ENCODE measurements at regions of chr12 and their contacts with region 1.

Region 1: DNA sequence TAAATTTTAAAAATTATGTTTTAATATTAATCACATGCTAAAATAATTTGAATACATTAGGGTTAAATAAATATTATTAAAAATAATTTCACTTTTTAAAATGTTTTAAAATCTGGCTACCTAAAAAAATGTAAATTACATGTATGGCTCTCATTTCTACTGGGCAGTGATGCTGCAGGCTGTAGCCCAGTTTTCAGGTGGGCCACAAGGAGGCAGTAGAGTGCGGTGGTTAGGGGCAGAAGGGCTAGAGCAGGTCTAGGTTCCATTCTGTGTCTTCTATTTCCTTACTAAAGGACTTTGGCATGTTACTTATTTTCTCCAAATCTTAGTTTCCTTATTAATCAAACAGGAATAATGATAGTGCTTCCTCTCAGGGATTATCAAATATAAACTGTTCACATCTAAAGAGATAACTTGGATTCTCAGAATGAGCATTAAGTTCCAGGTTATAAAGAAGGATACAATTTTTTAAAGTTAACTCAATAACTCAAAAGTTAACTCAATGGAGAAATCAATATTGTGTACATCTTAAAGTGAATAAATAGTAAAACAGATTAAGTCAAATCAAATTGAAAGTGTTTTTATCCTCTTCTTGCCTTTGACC is 54.9 kb upstream of the OVCH1 start:
- DNase-seq: peak; percentile 66 to 87
- ATAC-seq: peak; percentile 88
- H3K4me3 ChIP-seq: no peak overlapping the region
- H3K27ac ChIP-seq: no peak overlapping the region
- H3K4me1 ChIP-seq: peaks cover 0 to 2% of the 10 kb centered on the region in 2 donors
- H3K27me3 ChIP-seq: no peaks in the 10 kb centered on the region

Region 2: DNA sequence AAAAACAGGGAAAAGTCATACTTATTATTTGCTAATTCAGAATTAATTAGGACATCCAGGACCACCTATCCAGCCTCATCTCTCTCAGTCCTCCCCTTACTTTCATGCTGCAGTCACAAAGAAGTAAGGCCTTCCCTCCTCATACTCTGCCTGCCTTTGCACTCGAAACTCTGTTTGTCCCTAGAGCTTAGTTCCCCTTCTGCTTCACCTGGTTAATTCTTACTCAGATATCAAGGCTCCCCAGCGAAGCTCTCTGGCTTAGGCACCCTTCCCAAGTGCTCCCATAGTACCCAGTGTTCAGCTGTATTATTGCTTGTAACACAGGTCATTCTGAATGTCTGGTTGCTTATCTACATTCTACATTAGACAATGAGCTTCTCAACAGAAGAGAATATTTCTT is 252.8 kb before region 1 on chr12:
- intact Hi-C with region 1: no loop called
- DNase-seq: no peak
- ATAC-seq: no peak
- H3K4me3 ChIP-seq: no peak overlapping the region
- H3K27ac ChIP-seq: no peak overlapping the region
- H3K4me1 ChIP-seq: no peaks in the 10 kb centered on the region
- H3K27me3 ChIP-seq: no peaks in the 10 kb centered on the region

Region 3: DNA sequence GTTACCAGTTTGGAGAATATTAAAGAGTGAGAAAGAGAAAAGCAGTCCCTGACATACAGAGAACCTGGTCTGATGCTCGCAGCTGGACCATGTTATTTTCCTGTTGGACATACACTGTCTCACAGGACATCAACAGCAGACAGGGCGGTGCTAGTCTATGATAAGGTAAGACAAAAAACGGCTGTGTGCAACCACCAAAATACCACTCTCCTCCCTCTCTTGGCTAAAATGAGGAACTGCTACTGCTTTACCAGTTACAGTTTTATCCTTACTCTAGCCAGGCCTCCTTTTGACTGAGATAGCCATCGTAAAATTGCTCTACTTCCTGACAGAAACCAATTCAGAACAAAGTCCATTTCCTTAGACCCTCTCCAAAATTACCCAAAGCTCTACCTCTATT is 124.5 kb before region 1 on chr12:
- intact Hi-C with region 1: no loop called
- DNase-seq: no peak
- ATAC-seq: no peak
- H3K4me3 ChIP-seq: no peak overlapping the region
- H3K27ac ChIP-seq: no peak overlapping the region
- H3K4me1 ChIP-seq: no peaks in the 10 kb centered on the region
- H3K27me3 ChIP-seq: no peaks in the 10 kb centered on the region

Region 4: DNA sequence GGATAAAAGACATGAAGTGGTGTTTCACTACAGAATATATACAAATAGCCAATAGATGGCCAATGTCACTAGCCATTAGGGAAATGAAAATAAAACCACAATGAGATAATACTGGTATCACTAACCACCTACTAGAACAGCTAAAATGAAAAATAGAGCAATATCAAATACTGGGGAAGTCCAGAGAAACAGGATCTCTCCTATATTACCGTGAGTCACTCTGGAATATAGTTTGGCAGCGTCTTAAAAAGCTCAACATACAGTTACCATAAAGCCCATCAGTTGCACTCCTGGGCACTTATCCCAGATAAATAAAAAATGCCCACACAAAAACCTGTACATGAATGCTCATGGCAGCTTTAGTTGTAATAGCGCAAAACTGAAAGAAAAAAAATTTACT is 129.7 kb after region 1 on chr12:
- intact Hi-C with region 1: no loop called
- DNase-seq: no peak
- ATAC-seq: no peak
- H3K4me3 ChIP-seq: no peak overlapping the region
- H3K27ac ChIP-seq: no peak overlapping the region
- H3K4me1 ChIP-seq: no peaks in the 10 kb centered on the region
- H3K27me3 ChIP-seq: no peaks in the 10 kb centered on the region

Region 5: GRCh38 chr12:29771786-29772185 is 219.4 kb after region 1 on chr12:
- intact Hi-C with region 1: loop called in 1 of 2 experiments (anchors 10 kb)
- DNase-seq: no peak
- ATAC-seq: no peak
- H3K4me3 ChIP-seq: no peak overlapping the region
- H3K27ac ChIP-seq: no peak overlapping the region
- H3K4me1 ChIP-seq: peaks cover 0 to 4% of the 10 kb centered on the region in 2 donors
- H3K27me3 ChIP-seq: no peaks in the 10 kb centered on the region

Region 6: GRCh38 chr12:29944269-29945000 is 392.0 kb after region 1 on chr12:
- intact Hi-C with region 1: loop called in 1 of 2 experiments (anchors 10 kb)
- DNase-seq: no peak
- ATAC-seq: no peak
- H3K4me3 ChIP-seq: no peak overlapping the region
- H3K27ac ChIP-seq: no peak overlapping the region
- H3K4me1 ChIP-seq: peaks cover 0 to 3% of the 10 kb centered on the region in 2 donors
- H3K27me3 ChIP-seq: no peaks in the 10 kb centered on the region

Region 7: GRCh38 chr12:30286345-30286926 is 734.0 kb after region 1 on chr12:
- intact Hi-C with region 1: loop called in 1 of 2 experiments (anchors 10 kb)
- DNase-seq: no peak
- ATAC-seq: no peak
- H3K4me3 ChIP-seq: no peak overlapping the region
- H3K27ac ChIP-seq: no peak overlapping the region
- H3K4me1 ChIP-seq: no peaks in the 10 kb centered on the region
- H3K27me3 ChIP-seq: no peaks in the 10 kb centered on the region